ENCODE measurements at regions of chr18 and their contacts with region 1.

Region 1: DNA sequence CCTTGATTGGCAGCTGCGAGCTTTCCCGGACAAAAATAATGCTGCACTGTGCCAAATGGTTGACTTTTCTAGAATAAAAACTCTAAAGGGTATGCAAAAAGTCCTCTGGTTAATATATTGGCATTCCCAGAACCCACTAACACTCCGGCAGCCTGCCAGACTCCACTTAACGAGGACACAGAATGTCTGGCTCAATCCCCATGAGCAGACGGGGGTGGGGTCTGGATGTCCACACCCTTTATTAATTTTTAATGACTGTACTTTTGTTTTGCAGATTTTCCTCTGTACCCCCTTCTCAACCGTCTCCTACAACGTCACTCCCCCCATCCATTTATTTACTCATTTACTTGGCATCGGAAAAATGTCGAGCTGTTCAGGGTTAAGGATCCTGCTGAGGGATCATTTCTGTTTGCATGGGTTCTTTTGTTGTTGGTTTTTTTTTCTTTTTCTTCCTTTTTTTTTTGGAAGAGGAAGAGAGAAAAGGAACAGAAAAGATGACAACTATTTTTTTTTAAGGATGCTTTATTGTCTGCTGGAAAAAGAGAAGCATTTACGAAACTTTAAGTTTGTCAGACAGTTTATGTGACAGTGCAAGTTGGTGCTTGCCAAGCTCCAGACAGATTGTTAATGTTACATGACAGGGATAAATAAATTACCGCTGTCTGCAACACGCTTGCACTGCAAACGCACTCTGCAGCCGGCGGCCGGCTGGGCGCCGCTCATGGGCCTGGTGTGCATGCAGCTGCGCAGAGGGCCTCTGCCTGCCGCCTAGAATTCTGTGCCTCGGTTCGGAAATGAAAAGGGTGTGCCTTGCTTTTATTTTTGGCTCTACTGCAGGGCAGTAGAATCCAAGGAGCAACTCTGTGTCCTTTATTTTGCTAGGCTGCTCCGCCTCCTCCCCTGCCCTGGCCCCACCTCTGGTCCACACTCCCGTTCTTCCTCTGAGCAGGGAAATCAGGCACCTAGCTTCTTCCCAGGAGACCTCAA is 3.6 kb downstream of the LDLRAD4 start:
- DNase-seq: peak; percentile 16 to 96
- H3K4me3 ChIP-seq: peak overlapping the region in 1 of 2 donors; percentile 5
- H3K27ac ChIP-seq: peak overlapping the region; percentile 57
- H3K4me1 ChIP-seq: peaks cover 66% of the 10 kb centered on the region
- H3K27me3 ChIP-seq: no peaks in the 10 kb centered on the region
- CTCF ChIP-seq: no peak
- POLR2A ChIP-seq: no peak

Region 2: GRCh38 chr18:13381944-13382365 is 159.8 kb after region 1 on chr18:
- intact Hi-C with region 1: loop called (anchors 10 kb)
- DNase-seq: peak in 1 of 2 donors; percentile 86
- H3K4me3 ChIP-seq: peak overlapping the region; percentile 27 to 32
- H3K27ac ChIP-seq: peak overlapping the region; percentile 71
- H3K4me1 ChIP-seq: peaks cover 42% of the 10 kb centered on the region
- H3K27me3 ChIP-seq: no peaks in the 10 kb centered on the region
- CTCF ChIP-seq: no peak
- POLR2A ChIP-seq: no peak